ENCODE measurements at regions of chr2 and their contacts with region 1.

Region 1: GRCh38 chr2:15154297-15154696 is 406.8 kb downstream of the NBAS start:
- DNase-seq: no peak
- H3K4me3 Mint-ChIP-seq: no peak overlapping the region
- H3K27ac Mint-ChIP-seq: no peak overlapping the region
- H3K4me1 Mint-ChIP-seq: peaks cover 11% of the 10 kb centered on the region
- H3K27me3 Mint-ChIP-seq: peaks cover 10% of the 10 kb centered on the region

Region 2: DNA sequence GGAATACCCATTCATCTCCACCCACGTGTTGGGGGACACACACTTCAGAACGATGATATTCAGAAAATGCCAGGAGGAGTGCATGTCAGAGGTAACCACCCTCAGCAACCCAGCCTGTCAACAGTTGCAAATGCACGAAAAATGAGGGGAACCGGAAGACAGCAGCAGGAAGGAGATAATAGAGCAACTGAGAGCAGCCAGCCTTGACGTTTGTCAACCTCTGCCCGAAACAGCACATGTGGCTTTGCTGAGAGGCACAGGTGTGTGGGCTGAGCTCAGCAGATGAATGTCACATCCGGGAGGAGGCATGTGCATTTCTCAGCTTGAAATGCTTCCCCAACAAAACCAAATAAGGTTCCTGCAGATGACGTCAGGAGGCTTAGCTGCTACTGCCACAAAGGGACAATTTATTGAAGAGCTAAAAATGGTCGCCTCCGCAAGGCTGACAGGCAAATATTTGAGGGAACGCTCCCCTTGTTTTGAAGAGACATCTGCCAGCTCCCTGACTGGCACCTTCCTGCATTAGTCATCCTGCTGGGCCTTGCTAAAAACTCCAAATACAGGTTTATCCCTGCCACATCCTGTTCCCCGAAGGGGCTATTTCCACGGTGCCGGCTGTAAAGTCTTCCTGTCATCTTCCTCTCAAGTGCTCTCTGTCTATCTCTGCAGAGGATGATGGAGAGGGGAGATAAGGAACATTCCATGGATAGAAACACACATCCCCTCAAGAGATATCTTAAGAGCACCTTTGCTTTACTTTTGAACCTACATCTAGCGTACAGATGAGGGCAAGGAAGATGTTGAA is 12.0 kb before region 1 on chr2:
- intact Hi-C with region 1: loop called (anchors 1 kb)
- DNase-seq: peak; percentile 72
- H3K4me3 Mint-ChIP-seq: peak overlapping the region; percentile 53
- H3K27ac Mint-ChIP-seq: peak overlapping the region; percentile 92
- H3K4me1 Mint-ChIP-seq: peaks cover 25% of the 10 kb centered on the region
- H3K27me3 Mint-ChIP-seq: no peaks in the 10 kb centered on the region